K562 (cell line): ENCODE measurements at regions of chr14 and their contacts with region 1.

Region 1: GRCh38 chr14:22314181-22314820 is 274.7 kb downstream of the DAD1 start:
- DNase-seq: peak; percentile 29 to 67 (median 33)
- ATAC-seq: peak; percentile 85
- H3K4me3 ChIP-seq: no peak overlapping the region
- H3K27ac ChIP-seq: no peak overlapping the region
- H3K4me1 ChIP-seq: no peaks in the 10 kb centered on the region
- H3K27me3 ChIP-seq: no peaks in the 10 kb centered on the region
- CTCF ChIP-seq: peak; percentile 58 to 66 (median 59)
- EP300 ChIP-seq: no peak
- POLR2A ChIP-seq: no peak
- RAD21 ChIP-seq: peak; percentile 54 to 66

Region 2: GRCh38 chr14:22375321-22375930 is 61.1 kb after region 1 on chr14:
- CTCF ChIA-PET with region 1: interaction called, 44 read pairs
- POLR2A ChIA-PET with region 1: no interaction called
- in situ Hi-C with region 1: loop called (anchors 5 kb)
- intact Hi-C with region 1: loop called (anchors 2 kb)
- DNase-seq: peak; percentile 16 to 49 (median 24)
- ATAC-seq: peak; percentile 63; the same call in 2 of the 3 replicates
- H3K4me3 ChIP-seq: no peak overlapping the region
- H3K27ac ChIP-seq: no peak overlapping the region
- H3K4me1 ChIP-seq: no peaks in the 10 kb centered on the region
- H3K27me3 ChIP-seq: no peaks in the 10 kb centered on the region
- CTCF ChIP-seq: peak; percentile 40 to 77 (median 48); a peak in 5 of 6 replicates
- EP300 ChIP-seq: no peak
- POLR2A ChIP-seq: no peak
- RAD21 ChIP-seq: peak; percentile 76 to 94